GM10248 (cell line): ENCODE measurements at regions of chr10 and their contacts with region 1.

Region 1: DNA sequence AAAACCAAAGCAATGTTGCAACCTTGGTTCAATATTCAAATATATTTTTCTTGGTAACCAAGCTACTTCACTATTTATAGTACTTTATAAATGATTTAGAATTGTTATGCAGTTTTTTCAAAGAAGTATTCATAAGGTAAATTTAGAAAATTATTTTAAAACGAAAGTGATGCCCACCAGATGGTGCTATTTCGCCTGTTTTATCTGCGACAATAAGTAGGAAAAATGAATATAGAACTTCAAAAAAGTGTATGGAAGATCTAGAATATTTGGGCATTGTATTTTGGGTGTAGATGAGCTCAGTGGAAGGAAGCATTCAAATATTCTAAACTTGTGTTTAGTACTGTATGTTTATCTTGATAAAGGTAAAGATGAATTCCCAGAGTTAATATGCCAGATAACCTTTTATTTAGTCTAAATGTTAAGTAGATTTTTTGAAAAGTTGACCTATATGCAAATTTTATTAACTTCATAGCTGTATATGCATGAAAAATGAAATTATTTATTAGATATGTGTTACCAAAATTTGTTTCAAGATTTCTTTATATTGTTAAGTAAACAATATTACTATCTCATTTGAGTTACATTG is 93.2 kb downstream of the ADK start:
- DNase-seq: no peak
- CTCF ChIP-seq: peak; percentile 30

Region 2: GRCh38 chr10:75094465-75094864 is 850.3 kb after region 1 on chr10:
- CTCF ChIA-PET with region 1: interaction called, 53 read pairs
- POLR2A ChIA-PET with region 1: no interaction called
- DNase-seq: no peak
- CTCF ChIP-seq: no peak